ENCODE measurements at regions of chr16 and their contacts with region 1.

Region 1: GRCh38 chr16:19822533-19822932 is 62.1 kb downstream of the GPRC5B start:
- DNase-seq: no peak
- H3K4me3 ChIP-seq: no peak overlapping the region
- H3K27ac ChIP-seq: no peak overlapping the region
- H3K4me1 ChIP-seq: no peaks in the 10 kb centered on the region
- H3K27me3 ChIP-seq: no peaks in the 10 kb centered on the region
- CTCF ChIP-seq: no peak

Region 2: GRCh38 chr16:19765860-19766553 is 56.5 kb before region 1 on chr16:
- CTCF ChIA-PET with region 1: no interaction called
- dilution Hi-C with region 1: no loop called
- in situ Hi-C with region 1: loop called in 1 of 2 experiments (anchors 10 kb)
- intact Hi-C with region 1: no loop called
- DNase-seq: no peak
- H3K4me3 ChIP-seq: no peak overlapping the region
- H3K27ac ChIP-seq: no peak overlapping the region
- H3K4me1 ChIP-seq: no peaks in the 10 kb centered on the region
- H3K27me3 ChIP-seq: no peaks in the 10 kb centered on the region
- CTCF ChIP-seq: no peak

Region 3: GRCh38 chr16:19879241-19879792 is 56.8 kb after region 1 on chr16:
- CTCF ChIA-PET with region 1: no interaction called
- dilution Hi-C with region 1: no loop called
- in situ Hi-C with region 1: no loop called
- intact Hi-C with region 1: no loop called
- DNase-seq: peak; percentile 84
- H3K4me3 ChIP-seq: no peak overlapping the region
- H3K27ac ChIP-seq: no peak overlapping the region
- H3K4me1 ChIP-seq: peaks cover 15% of the 10 kb centered on the region
- H3K27me3 ChIP-seq: peaks cover 9% of the 10 kb centered on the region
- CTCF ChIP-seq: peak in 1 of 2 donors; percentile 18

Region 4: DNA sequence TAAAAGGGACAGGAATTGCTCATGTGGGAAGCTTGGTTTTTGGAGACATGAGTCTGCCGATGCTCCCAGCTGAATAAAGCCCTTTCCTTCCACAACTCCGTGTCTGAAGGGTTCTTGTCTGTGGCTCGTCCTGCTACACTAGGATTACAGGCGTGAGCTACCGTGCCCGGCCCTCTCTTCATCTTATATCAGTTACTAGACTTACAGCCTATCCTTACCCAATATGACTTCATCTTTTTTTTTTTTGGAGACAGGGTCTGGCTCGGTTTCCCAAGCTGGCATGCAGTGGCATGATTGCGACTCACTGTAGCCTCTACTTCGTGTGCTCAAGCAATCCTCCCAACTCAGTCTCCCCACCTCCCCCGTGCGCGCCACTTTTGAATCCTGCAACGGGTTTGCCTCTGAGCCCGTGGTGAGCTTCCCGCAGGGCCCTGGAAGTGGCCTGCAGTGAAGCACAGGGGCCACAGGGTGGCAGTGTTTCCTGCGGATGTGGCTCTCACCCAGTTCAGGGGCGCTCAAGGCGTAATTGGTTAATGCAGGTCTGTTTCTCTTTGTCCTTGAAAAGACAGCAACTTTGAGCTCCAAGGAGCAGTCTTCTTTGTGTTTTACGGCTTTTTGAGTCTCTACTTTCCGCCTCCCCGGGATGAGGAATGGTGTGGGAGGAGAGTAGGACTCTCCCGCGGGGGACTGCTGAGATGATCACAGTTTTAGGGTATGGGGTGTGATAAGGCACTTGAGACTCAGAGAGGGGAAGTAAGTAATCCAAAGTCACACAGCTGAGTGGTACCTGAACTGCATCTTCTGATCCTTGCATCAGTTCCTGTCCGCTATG is 84.8 kb after region 1 on chr16:
- CTCF ChIA-PET with region 1: no interaction called
- dilution Hi-C with region 1: no loop called
- in situ Hi-C with region 1: no loop called
- intact Hi-C with region 1: no loop called
- DNase-seq: peak; percentile 52
- H3K4me3 ChIP-seq: no peak overlapping the region
- H3K27ac ChIP-seq: no peak overlapping the region
- H3K4me1 ChIP-seq: no peaks in the 10 kb centered on the region
- H3K27me3 ChIP-seq: no peaks in the 10 kb centered on the region
- CTCF ChIP-seq: peak; percentile 92 to 97